ENCODE measurements at regions of chr5 and their contacts with region 1.

Region 1: DNA sequence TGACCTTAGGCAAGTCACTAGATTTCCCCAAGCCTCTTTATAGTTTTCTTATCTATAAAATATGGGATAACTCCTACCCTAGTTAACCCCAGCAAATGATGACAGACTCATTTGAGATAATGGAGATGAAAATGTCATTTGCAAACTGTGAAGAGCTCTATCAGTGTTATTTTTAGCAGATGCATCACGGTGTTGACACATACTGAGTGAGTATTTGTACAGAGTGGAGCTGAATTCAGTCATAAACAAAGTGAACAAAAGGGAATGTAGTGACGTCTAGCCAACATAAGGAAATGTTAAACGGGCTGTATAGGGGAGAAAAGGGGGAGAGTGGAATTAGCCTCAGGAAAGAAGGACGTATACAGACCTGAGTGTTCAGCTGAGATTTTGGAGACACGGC is 75.9 kb downstream of the NMUR2 start:
- DNase-seq: no peak
- H3K4me3 Mint-ChIP-seq: no peak overlapping the region
- H3K27ac Mint-ChIP-seq: no peak overlapping the region
- H3K4me1 Mint-ChIP-seq: peaks cover 17% of the 10 kb centered on the region
- H3K27me3 Mint-ChIP-seq: no peaks in the 10 kb centered on the region
- CTCF ChIP-seq: no peak

Region 2: GRCh38 chr5:152271420-152271819 is 57.8 kb before region 1 on chr5:
- CTCF ChIA-PET with region 1: no interaction called
- intact Hi-C with region 1: no loop called
- DNase-seq: peak; percentile 52
- H3K4me3 Mint-ChIP-seq: no peak overlapping the region
- H3K27ac Mint-ChIP-seq: no peak overlapping the region
- H3K4me1 Mint-ChIP-seq: no peaks in the 10 kb centered on the region
- H3K27me3 Mint-ChIP-seq: peaks cover 9% of the 10 kb centered on the region
- CTCF ChIP-seq: peak; percentile 50

Region 3: DNA sequence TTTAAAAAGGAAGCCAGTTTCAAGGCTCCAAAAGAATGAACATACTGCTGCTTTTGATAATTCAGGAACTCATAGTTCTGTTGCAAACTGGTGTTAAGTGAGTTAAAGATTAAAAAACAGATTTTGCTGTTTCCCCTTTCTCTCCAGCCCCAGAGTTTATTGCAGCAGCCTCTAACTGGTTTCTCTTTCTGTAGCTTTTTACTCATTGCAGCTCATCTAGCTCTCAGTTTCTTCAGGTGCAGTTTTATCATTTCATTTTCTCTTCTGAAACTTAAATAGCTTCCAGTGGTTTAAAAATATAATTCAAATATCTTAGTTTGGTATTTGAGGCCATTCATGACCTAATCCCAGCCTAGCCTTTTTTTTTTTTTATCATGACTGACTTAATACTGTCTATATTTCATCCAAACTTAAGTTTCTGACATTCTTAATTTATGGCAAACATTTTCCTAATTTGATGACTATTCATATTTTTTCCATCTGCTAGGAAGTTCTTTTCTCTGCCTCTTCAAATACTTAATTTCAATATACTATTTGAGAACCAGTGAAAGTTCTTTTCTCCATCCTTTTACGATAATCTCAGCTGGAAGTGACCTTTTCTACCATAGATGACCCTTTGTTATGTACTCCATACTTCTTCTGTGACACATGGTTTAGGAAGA is 908.6 kb after region 1 on chr5:
- CTCF ChIA-PET with region 1: no interaction called
- intact Hi-C with region 1: loop called (anchors 5 kb)
- DNase-seq: no peak
- H3K4me3 Mint-ChIP-seq: no peak overlapping the region
- H3K27ac Mint-ChIP-seq: no peak overlapping the region
- H3K4me1 Mint-ChIP-seq: no peaks in the 10 kb centered on the region
- H3K27me3 Mint-ChIP-seq: no peaks in the 10 kb centered on the region
- CTCF ChIP-seq: no peak